ENCODE measurements at regions of chr6 and their contacts with region 1.

Region 1: GRCh38 chr6:154247119-154247861 is 109.3 kb downstream of the IPCEF1 start:
- DNase-seq: peak; percentile 62
- ATAC-seq: peak; percentile 57
- H3K4me3 Mint-ChIP-seq: peak overlapping the region; percentile 79
- H3K27ac Mint-ChIP-seq: peak overlapping the region; percentile 89
- H3K4me1 Mint-ChIP-seq: peaks cover 80% of the 10 kb centered on the region
- H3K27me3 Mint-ChIP-seq: peaks cover 6% of the 10 kb centered on the region

Region 2: GRCh38 chr6:153002607-153003365 is 1244.5 kb before region 1 on chr6 and contains the start of gene MTRF1L:
- CTCF ChIA-PET with region 1: no interaction called
- POLR2A ChIA-PET with region 1: no interaction called
- intact Hi-C with region 1: loop called in 1 of 2 experiments (anchors 5 kb)
- DNase-seq: peak; percentile 95
- ATAC-seq: peak; percentile 87
- H3K4me3 Mint-ChIP-seq: peak within 1 kb of the TSS; percentile 92
- H3K27ac Mint-ChIP-seq: peak within 1 kb of the TSS; percentile 99
- H3K4me1 Mint-ChIP-seq: peaks cover 36% of the 10 kb centered on the region
- H3K27me3 Mint-ChIP-seq: no peaks in the 10 kb centered on the region
- total RNA-seq, gene MTRF1L: 16.8 to 19.9 TPM

Region 3: DNA sequence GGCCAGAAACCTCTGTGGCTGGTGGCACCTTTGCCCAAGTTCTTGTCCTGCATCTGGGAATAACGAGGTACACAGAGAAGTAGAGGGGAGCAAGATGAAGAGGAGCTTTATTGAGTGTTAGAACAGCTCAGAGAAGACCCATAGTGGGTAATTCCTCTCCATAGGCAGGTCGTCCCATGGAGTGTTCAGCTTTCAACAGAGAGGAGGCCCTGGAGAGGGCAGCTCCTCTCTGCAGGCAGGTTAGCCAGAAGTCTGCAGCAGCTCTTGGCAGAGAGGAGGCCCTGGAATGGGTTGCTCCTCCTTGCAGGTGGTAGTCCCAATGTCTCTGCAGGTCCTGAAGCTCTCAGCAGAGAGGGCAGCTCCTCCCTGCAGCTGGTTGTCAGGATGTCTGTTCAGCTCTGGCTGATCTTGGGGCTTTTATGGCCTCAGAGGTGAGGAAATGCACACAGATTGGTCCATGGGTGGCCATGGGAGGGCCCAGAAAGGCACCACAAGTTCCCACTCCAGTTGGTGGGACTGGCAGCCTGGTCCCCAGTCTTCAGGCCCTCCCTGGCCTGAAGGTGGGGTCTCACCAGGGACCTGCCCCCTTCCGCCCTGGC is 20.3 kb after region 1 on chr6:
- CTCF ChIA-PET with region 1: interaction called, 4 read pairs
- POLR2A ChIA-PET with region 1: no interaction called
- intact Hi-C with region 1: loop called in 1 of 2 experiments (anchors 1 kb)
- DNase-seq: no peak
- ATAC-seq: peak; percentile 19
- H3K4me3 Mint-ChIP-seq: no peak overlapping the region
- H3K27ac Mint-ChIP-seq: no peak overlapping the region
- H3K4me1 Mint-ChIP-seq: peaks cover 28% of the 10 kb centered on the region
- H3K27me3 Mint-ChIP-seq: no peaks in the 10 kb centered on the region

Region 4: GRCh38 chr6:154352898-154353585 is 105.8 kb after region 1 on chr6:
- CTCF ChIA-PET with region 1: no interaction called
- POLR2A ChIA-PET with region 1: no interaction called
- intact Hi-C with region 1: loop called (anchors 2 to 5 kb)
- DNase-seq: peak; percentile 78
- ATAC-seq: peak; percentile 85
- H3K4me3 Mint-ChIP-seq: no peak overlapping the region
- H3K27ac Mint-ChIP-seq: no peak overlapping the region
- H3K4me1 Mint-ChIP-seq: peaks cover 29% of the 10 kb centered on the region
- H3K27me3 Mint-ChIP-seq: peaks cover 35% of the 10 kb centered on the region

Region 5: DNA sequence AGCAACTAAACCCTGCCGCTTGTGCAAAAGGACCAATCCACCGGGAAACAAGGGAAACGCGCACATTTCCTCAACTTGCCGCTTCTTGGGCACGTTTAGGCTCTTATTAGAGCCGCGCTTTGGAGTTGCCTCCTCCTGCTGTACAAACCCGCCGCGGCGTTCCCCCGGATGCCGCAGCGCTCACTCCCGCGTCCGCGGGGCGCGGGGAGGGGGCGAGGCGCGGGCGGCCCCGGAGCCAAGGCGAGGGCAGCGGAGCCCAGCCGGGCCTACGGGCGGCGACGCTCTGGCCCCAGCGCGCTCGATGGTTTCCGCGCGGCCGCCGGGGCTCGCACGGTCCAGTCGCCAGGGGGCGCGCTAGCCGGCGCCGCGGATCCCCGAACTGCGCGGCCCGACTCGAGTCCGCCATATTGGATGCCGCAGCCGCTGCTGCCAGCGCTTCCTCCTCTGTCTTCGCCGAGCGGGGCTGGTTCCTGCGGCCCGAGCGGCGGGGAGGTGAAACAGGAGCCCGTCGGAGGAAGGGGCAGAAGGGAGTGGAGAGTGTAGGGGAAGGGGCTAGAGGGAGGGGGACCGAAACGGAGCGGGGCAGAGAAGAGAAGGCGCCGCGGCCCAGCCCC is 485.8 kb after region 1 on chr6 and contains the start of gene SCAF8:
- CTCF ChIA-PET with region 1: no interaction called
- POLR2A ChIA-PET with region 1: no interaction called
- intact Hi-C with region 1: loop called in 1 of 2 experiments (anchors 5 kb)
- DNase-seq: peak; percentile 90
- ATAC-seq: peak; percentile 78
- H3K4me3 Mint-ChIP-seq: peak within 1 kb of the TSS; percentile 86
- H3K27ac Mint-ChIP-seq: peak within 1 kb of the TSS; percentile 94
- H3K4me1 Mint-ChIP-seq: peaks cover 42% of the 10 kb centered on the region
- H3K27me3 Mint-ChIP-seq: no peaks in the 10 kb centered on the region
- total RNA-seq, gene SCAF8: 33.9 to 44.5 TPM

Region 6: GRCh38 chr6:155314092-155314772 is 1066.9 kb after region 1 on chr6 and contains the start of gene TFB1M:
- CTCF ChIA-PET with region 1: no interaction called
- POLR2A ChIA-PET with region 1: no interaction called
- intact Hi-C with region 1: loop called in 1 of 2 experiments (anchors 10 kb)
- DNase-seq: peak; percentile 99
- ATAC-seq: peak; percentile 95
- H3K4me3 Mint-ChIP-seq: peak within 1 kb of the TSS; percentile 90
- H3K27ac Mint-ChIP-seq: peak within 1 kb of the TSS; percentile 98
- H3K4me1 Mint-ChIP-seq: peaks cover 39% of the 10 kb centered on the region
- H3K27me3 Mint-ChIP-seq: no peaks in the 10 kb centered on the region
- total RNA-seq, gene TFB1M: 45.5 to 56.4 TPM